ENCODE measurements at regions of chr9 and their contacts with region 1.

Region 1: GRCh38 chr9:90102292-90102901 is 497.6 kb downstream of the GADD45G start:
- DNase-seq: peak; percentile 79
- H3K4me3 ChIP-seq: no peak overlapping the region
- H3K27ac ChIP-seq: no peak overlapping the region
- H3K4me1 ChIP-seq: no peaks in the 10 kb centered on the region
- H3K27me3 ChIP-seq: no peaks in the 10 kb centered on the region
- CTCF ChIP-seq: peak; percentile 62 to 74
- POLR2A ChIP-seq: no peak

Region 2: GRCh38 chr9:89576404-89576839 is 526.0 kb before region 1 on chr9:
- CTCF ChIA-PET with region 1: interaction called, 10 read pairs
- POLR2A ChIA-PET with region 1: no interaction called
- dilution Hi-C with region 1: no loop called
- intact Hi-C with region 1: no loop called
- DNase-seq: peak; percentile 48
- H3K4me3 ChIP-seq: no peak overlapping the region
- H3K27ac ChIP-seq: no peak overlapping the region
- H3K4me1 ChIP-seq: no peaks in the 10 kb centered on the region
- H3K27me3 ChIP-seq: peaks cover 15 to 21% of the 10 kb centered on the region in 2 experiments
- CTCF ChIP-seq: peak; percentile 33 to 37
- POLR2A ChIP-seq: no peak

Region 3: DNA sequence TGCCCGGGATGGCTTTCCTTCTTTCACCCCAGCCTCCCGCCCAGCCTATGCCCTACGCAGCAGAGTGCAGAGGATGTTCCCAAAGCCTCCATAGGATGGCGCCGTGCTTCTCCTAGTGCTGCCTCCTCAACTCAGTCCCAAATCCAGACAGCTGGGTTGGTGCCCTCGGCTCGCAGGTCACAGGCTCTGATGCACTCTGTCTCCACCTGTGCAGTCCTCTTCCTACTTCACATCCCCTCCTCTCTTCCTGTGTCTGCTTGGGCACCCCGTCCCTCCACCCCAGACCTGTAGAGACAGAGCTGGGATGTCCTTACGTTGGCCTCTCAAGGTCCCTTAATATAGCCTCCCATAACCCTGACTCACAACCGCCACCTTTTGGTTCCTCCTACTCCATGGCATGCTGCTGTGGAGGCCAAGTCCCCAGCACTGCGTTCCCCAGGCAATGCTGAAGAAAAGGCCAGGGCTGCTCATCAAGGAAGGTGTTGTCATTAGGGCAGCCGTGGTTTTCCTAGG is 183.2 kb before region 1 on chr9:
- CTCF ChIA-PET with region 1: no interaction called
- POLR2A ChIA-PET with region 1: no interaction called
- dilution Hi-C with region 1: no loop called
- intact Hi-C with region 1: loop called (anchors 10 kb)
- DNase-seq: no peak
- H3K4me3 ChIP-seq: no peak overlapping the region
- H3K27ac ChIP-seq: no peak overlapping the region
- H3K4me1 ChIP-seq: no peaks in the 10 kb centered on the region
- H3K27me3 ChIP-seq: no peaks in the 10 kb centered on the region
- CTCF ChIP-seq: no peak
- POLR2A ChIP-seq: no peak

Region 4: DNA sequence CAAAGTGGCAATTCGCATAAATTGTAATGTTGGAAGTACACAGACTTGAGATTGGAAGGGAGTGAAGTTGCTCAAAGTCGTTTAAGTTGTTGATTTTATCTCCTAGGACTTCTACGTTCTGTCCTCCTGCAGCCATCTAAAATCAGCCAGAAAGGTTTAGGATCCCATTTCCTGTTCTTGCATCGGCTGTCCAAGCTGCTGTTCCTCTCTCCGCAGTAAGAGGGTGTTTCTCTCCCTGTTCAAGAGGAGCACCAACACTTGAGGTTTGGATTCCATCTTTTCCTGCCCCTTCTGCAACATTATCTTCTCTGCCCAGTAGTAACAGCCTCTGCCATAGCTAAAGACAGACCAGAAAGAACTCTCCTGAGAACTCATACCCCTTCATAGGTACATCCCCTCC is 124.2 kb before region 1 on chr9:
- CTCF ChIA-PET with region 1: no interaction called
- POLR2A ChIA-PET with region 1: no interaction called
- dilution Hi-C with region 1: no loop called
- intact Hi-C with region 1: loop called (anchors 10 kb)
- DNase-seq: no peak
- H3K4me3 ChIP-seq: no peak overlapping the region
- H3K27ac ChIP-seq: no peak overlapping the region
- H3K4me1 ChIP-seq: no peaks in the 10 kb centered on the region
- H3K27me3 ChIP-seq: no peaks in the 10 kb centered on the region
- CTCF ChIP-seq: no peak
- POLR2A ChIP-seq: no peak

Region 5: GRCh38 chr9:90331826-90332575 is 229.6 kb after region 1 on chr9:
- CTCF ChIA-PET with region 1: no interaction called
- POLR2A ChIA-PET with region 1: no interaction called
- dilution Hi-C with region 1: no loop called
- intact Hi-C with region 1: no loop called
- DNase-seq: no peak
- H3K4me3 ChIP-seq: no peak overlapping the region
- H3K27ac ChIP-seq: no peak overlapping the region
- H3K4me1 ChIP-seq: no peaks in the 10 kb centered on the region
- H3K27me3 ChIP-seq: no peaks in the 10 kb centered on the region
- CTCF ChIP-seq: no peak
- POLR2A ChIP-seq: no peak